PC-9 (cell line): ENCODE measurements at regions of chr1 and their contacts with region 1.

Region 1: GRCh38 chr1:40078512-40079333 is 18.3 kb downstream of the PPT1 start:
- DNase-seq: peak; percentile 65 to 73
- H3K4me3 ChIP-seq: no peak overlapping the region
- H3K27ac ChIP-seq: no peak overlapping the region
- H3K4me1 ChIP-seq: no peaks in the 10 kb centered on the region
- H3K27me3 ChIP-seq: no peaks in the 10 kb centered on the region
- CTCF ChIP-seq: peak; percentile 93

Region 2: GRCh38 chr1:39866767-39867166 is 212.0 kb before region 1 on chr1:
- CTCF ChIA-PET with region 1: no interaction called
- POLR2A ChIA-PET with region 1: interaction called, 15 read pairs
- intact Hi-C with region 1: no loop called
- DNase-seq: no peak
- H3K4me3 ChIP-seq: no peak overlapping the region
- H3K27ac ChIP-seq: no peak overlapping the region
- H3K4me1 ChIP-seq: no peaks in the 10 kb centered on the region
- H3K27me3 ChIP-seq: no peaks in the 10 kb centered on the region
- CTCF ChIP-seq: no peak

Region 3: DNA sequence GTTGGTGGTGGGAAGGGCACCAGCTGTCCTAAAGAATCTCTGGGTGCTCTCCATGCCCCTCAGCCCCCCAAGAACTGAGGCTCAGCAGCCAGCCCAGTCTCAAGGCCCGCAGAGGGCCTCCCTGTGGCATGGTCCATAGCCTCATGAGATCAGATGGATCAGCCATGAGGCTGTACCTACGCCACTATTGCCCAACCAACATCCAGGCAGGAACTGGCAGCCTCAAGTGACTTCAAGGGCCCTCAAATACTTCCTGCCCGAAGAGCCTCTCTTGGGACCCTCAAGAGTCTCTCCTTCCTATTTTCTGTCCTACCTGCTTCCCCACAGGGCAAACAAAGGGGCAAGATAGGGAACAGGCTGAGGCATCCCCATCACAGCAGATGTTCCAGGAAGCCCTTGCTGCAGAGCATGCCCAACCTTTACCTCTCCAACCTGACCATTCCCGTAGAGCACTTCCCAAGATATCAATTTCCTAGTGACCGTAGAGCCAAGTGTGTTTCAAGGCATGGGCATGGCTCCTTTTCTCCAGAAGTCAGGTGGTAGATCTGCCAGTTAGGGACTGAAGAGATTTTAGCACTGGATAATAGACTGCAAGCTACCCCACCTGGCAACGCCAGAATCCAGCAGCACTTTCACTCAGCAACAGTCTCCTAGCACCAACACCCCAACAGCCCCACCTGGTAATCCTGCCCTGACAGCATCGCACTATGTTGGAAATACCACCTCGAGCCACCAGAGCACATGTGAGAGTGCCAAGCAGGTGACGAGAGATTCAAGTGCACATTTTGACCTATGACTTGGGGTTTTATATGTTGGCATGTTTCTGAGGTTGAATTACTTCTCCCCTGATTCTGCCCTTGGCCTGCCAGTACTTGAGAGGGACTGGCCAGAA is 137.5 kb before region 1 on chr1:
- CTCF ChIA-PET with region 1: no interaction called
- POLR2A ChIA-PET with region 1: no interaction called
- intact Hi-C with region 1: no loop called
- DNase-seq: no peak
- H3K4me3 ChIP-seq: no peak overlapping the region
- H3K27ac ChIP-seq: no peak overlapping the region
- H3K4me1 ChIP-seq: peaks cover 14% of the 10 kb centered on the region
- H3K27me3 ChIP-seq: no peaks in the 10 kb centered on the region
- CTCF ChIP-seq: no peak

Region 4: GRCh38 chr1:40057310-40058030 is 21.3 kb before region 1 on chr1:
- CTCF ChIA-PET with region 1: interaction called, 3 read pairs
- POLR2A ChIA-PET with region 1: interaction called, 16 read pairs
- intact Hi-C with region 1: no loop called
- DNase-seq: no peak
- H3K4me3 ChIP-seq: no peak overlapping the region
- H3K27ac ChIP-seq: peak overlapping the region; percentile 84
- H3K4me1 ChIP-seq: peaks cover 41% of the 10 kb centered on the region
- H3K27me3 ChIP-seq: no peaks in the 10 kb centered on the region
- CTCF ChIP-seq: no peak

Region 5: DNA sequence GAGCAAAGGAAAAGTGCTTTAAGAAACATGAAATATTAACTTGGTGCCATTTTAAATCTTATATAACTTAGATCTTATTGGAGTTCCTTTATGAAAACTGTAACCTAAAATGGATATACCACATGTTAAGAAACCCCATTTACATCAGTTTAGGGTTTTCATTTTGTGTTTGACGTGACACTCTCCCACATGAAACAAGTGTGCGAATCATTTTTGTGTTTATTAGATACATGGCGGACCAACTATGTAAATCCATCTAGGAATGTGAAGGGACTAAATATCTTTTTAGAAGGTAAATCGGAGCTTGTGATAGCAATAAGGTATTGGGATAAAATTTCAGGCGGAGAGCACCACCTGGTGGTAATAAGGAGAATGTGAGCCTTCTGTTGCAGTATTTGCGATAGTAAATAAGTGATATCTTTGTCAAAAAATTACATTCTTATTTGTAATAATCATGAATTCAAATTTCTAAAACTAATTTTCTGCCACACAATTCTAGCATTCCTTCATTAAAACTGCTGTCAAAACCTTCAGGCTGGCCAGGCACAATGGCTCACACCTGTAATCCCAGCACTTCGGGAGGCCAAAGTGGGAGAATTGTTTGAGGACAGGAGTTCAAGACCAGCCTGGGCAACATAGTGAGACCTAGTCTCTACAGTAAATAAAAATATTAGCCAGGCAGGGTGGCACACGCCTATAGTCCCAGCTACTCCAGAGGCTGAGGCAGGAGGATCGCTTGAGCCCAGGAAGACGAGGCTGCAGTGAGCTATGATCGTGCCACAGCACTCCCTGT is 326.1 kb after region 1 on chr1:
- CTCF ChIA-PET with region 1: interaction called, 3 read pairs
- POLR2A ChIA-PET with region 1: no interaction called
- intact Hi-C with region 1: loop called (anchors 2 kb)
- DNase-seq: peak; percentile 32 to 54
- H3K4me3 ChIP-seq: no peak overlapping the region
- H3K27ac ChIP-seq: no peak overlapping the region
- H3K4me1 ChIP-seq: no peaks in the 10 kb centered on the region; the same call in 1 of the 2 replicates
- H3K27me3 ChIP-seq: no peaks in the 10 kb centered on the region
- CTCF ChIP-seq: peak; percentile 91